ENCODE measurements at regions of chr19 and their contacts with region 1.

Region 1: GRCh38 chr19:1540365-1540925 is 16.6 kb downstream of the PLK5 start:
- DNase-seq: no peak
- H3K4me3 Mint-ChIP-seq: no peak overlapping the region
- H3K27ac Mint-ChIP-seq: no peak overlapping the region
- H3K4me1 Mint-ChIP-seq: no peaks in the 10 kb centered on the region
- H3K27me3 Mint-ChIP-seq: peaks cover 12% of the 10 kb centered on the region

Region 2: GRCh38 chr19:1767464-1767933 is 227.1 kb after region 1 on chr19:
- intact Hi-C with region 1: loop called (anchors 10 kb)
- DNase-seq: peak; percentile 46
- H3K4me3 Mint-ChIP-seq: no peak overlapping the region
- H3K27ac Mint-ChIP-seq: no peak overlapping the region
- H3K4me1 Mint-ChIP-seq: peaks cover 1% of the 10 kb centered on the region
- H3K27me3 Mint-ChIP-seq: peaks cover 50% of the 10 kb centered on the region

Measured in activated T-helper 2 cell treated with anti-CD3 and anti-CD28 coated beads, Interferon-gamma antibody, Interleukin-2, Interleukin-4, amounts not matched to agents 10 μg/mL and 5 μg/mL and 100 μg/mL, durations not matched to agents 14 hours and 24 hours and 36 hours (primary cell).